Vagina (tissue), 2 donors: ENCODE measurements at regions of chr1 and their contacts with region 1.

Region 1: GRCh38 chr1:204431310-204432165 is 19.9 kb upstream of the PPP1R15B start:
- DNase-seq: no peak
- H3K4me3 ChIP-seq: no peak overlapping the region
- H3K27ac ChIP-seq: peak overlapping the region; percentile 39
- H3K4me1 ChIP-seq: peaks cover 10% of the 10 kb centered on the region
- H3K27me3 ChIP-seq: no peaks in the 10 kb centered on the region
- CTCF ChIP-seq: peak; percentile 72 to 79 (median 75)
- POLR2A ChIP-seq: no peak

Region 2: DNA sequence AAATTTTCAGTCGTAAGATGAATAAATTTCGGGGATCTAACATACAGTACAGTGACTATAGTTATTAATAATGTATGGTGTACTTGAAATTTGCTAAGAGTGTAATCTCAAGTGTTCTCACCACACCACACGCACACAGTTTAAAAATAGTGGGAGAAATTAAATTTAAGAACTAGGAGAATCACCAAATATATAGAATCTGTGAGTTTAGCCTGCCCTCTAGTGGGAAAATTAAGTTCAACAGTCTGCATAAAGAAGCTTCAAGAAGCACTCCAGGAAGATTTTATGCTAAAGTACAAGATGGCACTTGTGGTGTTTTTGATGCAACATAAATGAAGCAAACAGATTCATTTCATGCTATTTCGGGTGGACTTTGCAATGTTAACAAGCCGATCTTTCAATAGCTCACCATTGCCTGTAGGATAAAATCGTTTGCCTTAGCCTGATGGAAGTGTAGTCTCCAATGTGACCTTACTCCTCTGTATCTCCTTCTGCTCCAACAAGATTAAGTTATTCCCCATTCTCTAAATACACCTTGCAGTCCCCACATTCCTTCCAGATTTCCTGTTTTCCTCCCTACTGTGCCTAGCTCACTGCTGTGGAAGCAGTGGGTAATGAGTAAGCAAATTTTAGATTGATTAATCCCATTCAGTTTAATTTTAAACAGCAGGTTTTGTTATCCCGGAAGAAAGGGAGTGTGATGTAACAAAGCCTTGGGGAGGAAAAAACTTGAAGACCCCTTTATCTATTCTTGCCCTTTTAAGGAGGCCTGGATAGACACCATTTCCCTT is 71.8 kb after region 1 on chr1:
- intact Hi-C with region 1: loop called (anchors 5 kb)
- DNase-seq: no peak
- H3K4me3 ChIP-seq: no peak overlapping the region
- H3K27ac ChIP-seq: no peak overlapping the region
- H3K4me1 ChIP-seq: no peaks in the 10 kb centered on the region
- H3K27me3 ChIP-seq: no peaks in the 10 kb centered on the region
- CTCF ChIP-seq: peak; percentile 72 to 79 (median 74)
- POLR2A ChIP-seq: no peak

Region 3: GRCh38 chr1:204633665-204634064 is 202.1 kb after region 1 on chr1:
- intact Hi-C with region 1: no loop called
- DNase-seq: no peak
- H3K4me3 ChIP-seq: no peak overlapping the region
- H3K27ac ChIP-seq: no peak overlapping the region
- H3K4me1 ChIP-seq: peaks cover 2% of the 10 kb centered on the region
- H3K27me3 ChIP-seq: no peaks in the 10 kb centered on the region
- CTCF ChIP-seq: no peak
- POLR2A ChIP-seq: no peak

Region 4: GRCh38 chr1:206029484-206029883 is 1597.9 kb after region 1 on chr1:
- intact Hi-C with region 1: loop called (anchors 10 kb)
- DNase-seq: no peak
- H3K4me3 ChIP-seq: no peak overlapping the region
- H3K27ac ChIP-seq: no peak overlapping the region
- H3K4me1 ChIP-seq: peaks cover 16% of the 10 kb centered on the region
- H3K27me3 ChIP-seq: no peaks in the 10 kb centered on the region
- CTCF ChIP-seq: no peak
- POLR2A ChIP-seq: no peak